Lower lobe of right lung (tissue), 2 donors: ENCODE measurements at regions of chr12 and their contacts with region 1.

Region 1: DNA sequence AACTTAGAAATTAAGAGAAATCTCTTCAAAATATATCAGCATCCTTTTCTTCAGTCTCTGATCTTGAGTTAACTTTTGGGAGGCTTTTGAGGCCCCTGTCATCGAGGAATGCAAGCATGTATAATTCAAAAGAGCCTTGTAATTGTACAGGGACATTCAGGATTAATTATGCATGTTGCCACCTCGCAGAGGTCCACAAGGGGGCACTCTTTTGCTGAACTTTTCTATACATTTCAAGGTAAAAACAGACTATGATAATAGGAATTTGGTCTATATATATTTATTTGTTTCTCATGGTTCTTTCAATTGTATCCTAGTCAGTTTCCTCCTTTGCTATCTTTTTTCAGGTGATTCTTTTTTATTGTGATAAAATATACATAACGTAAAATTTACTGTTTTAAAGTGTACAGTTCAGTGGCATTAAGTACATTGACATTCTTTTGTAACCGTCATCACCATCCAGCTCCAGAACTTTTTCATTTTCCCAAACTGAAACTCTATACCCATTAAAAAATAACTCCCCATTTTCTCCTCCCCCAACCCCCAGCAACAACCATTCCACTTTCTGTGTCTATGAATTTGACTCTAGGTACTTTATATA is 47.0 kb upstream of the SLC2A13 start:
- DNase-seq: peak; percentile 52
- ATAC-seq: peak; percentile 48 to 61
- H3K4me3 ChIP-seq: no peak overlapping the region
- H3K27ac ChIP-seq: no peak overlapping the region
- H3K4me1 ChIP-seq: peaks cover 8% of the 10 kb centered on the region
- H3K27me3 ChIP-seq: no peaks in the 10 kb centered on the region
- CTCF ChIP-seq: peak; percentile 90

Region 2: GRCh38 chr12:40248585-40249297 is 95.9 kb after region 1 on chr12:
- intact Hi-C with region 1: loop called (anchors 10 kb)
- DNase-seq: no peak
- ATAC-seq: peak in 1 of 2 donors; percentile 30
- H3K4me3 ChIP-seq: no peak overlapping the region
- H3K27ac ChIP-seq: no peak overlapping the region
- H3K4me1 ChIP-seq: no peaks in the 10 kb centered on the region
- H3K27me3 ChIP-seq: no peaks in the 10 kb centered on the region
- CTCF ChIP-seq: no peak

Region 3: DNA sequence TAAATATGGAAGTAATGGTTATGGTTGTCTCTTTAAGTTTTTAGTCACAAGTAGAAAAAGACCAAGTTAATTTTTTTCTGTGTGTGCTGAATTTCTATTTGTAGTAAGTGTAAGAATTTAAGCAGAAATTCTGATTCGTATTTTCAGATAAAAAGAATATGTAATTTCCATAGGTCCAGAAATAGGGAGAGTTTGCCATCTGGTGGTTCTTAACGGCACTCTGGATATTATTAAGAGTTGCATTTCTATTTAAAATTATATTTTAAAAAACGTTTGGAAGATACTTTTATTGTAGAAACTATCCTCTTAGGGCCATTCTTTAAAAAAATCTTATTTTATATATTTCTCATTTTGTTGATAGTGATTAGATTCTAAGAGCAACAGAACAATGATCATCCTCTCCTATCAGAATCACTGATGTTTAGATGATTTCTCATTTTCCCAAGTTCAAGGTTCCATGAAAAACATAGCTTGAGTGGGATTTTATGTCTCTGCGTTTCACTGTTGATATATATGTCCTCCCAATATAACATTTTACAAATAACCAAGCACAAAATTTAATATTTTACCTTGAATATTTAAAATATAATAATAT is 160.2 kb after region 1 on chr12:
- intact Hi-C with region 1: loop called (anchors 10 kb)
- DNase-seq: no peak
- ATAC-seq: no peak
- H3K4me3 ChIP-seq: no peak overlapping the region
- H3K27ac ChIP-seq: no peak overlapping the region
- H3K4me1 ChIP-seq: no peaks in the 10 kb centered on the region
- H3K27me3 ChIP-seq: no peaks in the 10 kb centered on the region
- CTCF ChIP-seq: peak; percentile 19